PC-9 (cell line): ENCODE measurements at regions of chr16 and their contacts with region 1.

Region 1: GRCh38 chr16:48478396-48478795 is 93.2 kb upstream of the SIAH1 start:
- DNase-seq: no peak
- H3K4me3 ChIP-seq: no peak overlapping the region
- H3K27ac ChIP-seq: no peak overlapping the region
- H3K4me1 ChIP-seq: no peaks in the 10 kb centered on the region
- H3K27me3 ChIP-seq: no peaks in the 10 kb centered on the region
- CTCF ChIP-seq: no peak

Region 2: GRCh38 chr16:48252013-48252412 is 226.4 kb before region 1 on chr16:
- CTCF ChIA-PET with region 1: no interaction called
- POLR2A ChIA-PET with region 1: interaction called, 14 read pairs
- intact Hi-C with region 1: no loop called
- DNase-seq: no peak
- H3K4me3 ChIP-seq: no peak overlapping the region
- H3K27ac ChIP-seq: no peak overlapping the region
- H3K4me1 ChIP-seq: peaks cover 4% of the 10 kb centered on the region; the same call in 1 of the 2 replicates
- H3K27me3 ChIP-seq: no peaks in the 10 kb centered on the region
- CTCF ChIP-seq: no peak

Region 3: GRCh38 chr16:48426244-48427141 is 51.9 kb before region 1 on chr16:
- CTCF ChIA-PET with region 1: no interaction called
- POLR2A ChIA-PET with region 1: no interaction called
- intact Hi-C with region 1: no loop called
- DNase-seq: no peak
- H3K4me3 ChIP-seq: no peak overlapping the region
- H3K27ac ChIP-seq: no peak overlapping the region
- H3K4me1 ChIP-seq: no peaks in the 10 kb centered on the region
- H3K27me3 ChIP-seq: no peaks in the 10 kb centered on the region
- CTCF ChIP-seq: no peak

Region 4: DNA sequence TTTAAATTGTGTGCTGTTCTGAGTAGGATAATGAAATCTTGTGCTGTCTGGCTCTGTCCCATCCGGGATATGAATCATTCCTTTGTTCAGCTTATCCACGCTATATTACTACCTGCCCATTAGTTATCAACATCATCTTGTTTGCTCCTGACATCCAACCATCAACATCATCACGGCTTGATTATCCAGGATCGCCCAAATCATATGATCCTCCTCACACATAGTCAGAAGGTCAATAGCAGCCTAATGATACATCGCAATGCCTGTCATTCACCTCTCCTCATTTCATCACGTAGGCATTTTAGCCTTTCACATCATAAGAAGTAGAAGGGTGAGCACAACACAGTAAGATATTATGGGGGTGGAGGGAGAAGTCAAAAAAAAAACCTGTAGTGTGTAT is 16.2 kb before region 1 on chr16:
- CTCF ChIA-PET with region 1: interaction called, 15 read pairs
- POLR2A ChIA-PET with region 1: no interaction called
- intact Hi-C with region 1: no loop called
- DNase-seq: peak; percentile 10 to 84
- H3K4me3 ChIP-seq: no peak overlapping the region
- H3K27ac ChIP-seq: peak overlapping the region; percentile 58
- H3K4me1 ChIP-seq: peaks cover 20% of the 10 kb centered on the region
- H3K27me3 ChIP-seq: no peaks in the 10 kb centered on the region
- CTCF ChIP-seq: no peak

Region 5: DNA sequence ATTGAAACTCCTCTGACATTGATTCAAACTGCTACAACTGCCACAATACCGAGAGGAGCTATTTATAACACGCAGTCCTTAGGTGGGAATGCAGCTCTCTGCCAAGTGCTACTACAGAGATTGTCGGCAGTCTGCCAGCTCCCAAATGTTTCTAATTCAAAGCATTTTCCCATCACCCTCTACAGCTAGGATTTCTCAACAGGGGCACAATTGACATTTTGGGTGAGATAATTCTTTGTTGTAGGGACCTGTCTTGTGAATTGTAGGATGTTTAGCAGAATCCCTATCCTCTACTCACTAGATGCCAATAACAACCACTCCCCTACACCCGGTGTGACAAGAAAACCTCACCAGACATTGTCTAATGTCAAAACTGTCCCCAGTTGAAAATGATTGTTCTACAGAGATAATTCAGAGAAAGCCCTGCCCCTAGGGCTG is 139.3 kb after region 1 on chr16:
- CTCF ChIA-PET with region 1: interaction called, 19 read pairs
- POLR2A ChIA-PET with region 1: no interaction called
- intact Hi-C with region 1: no loop called
- DNase-seq: no peak
- H3K4me3 ChIP-seq: no peak overlapping the region
- H3K27ac ChIP-seq: no peak overlapping the region
- H3K4me1 ChIP-seq: 0 out of 2 replicates have a peak, but pooled peaks cover 10% of the 10 kb centered on the region
- H3K27me3 ChIP-seq: no peaks in the 10 kb centered on the region
- CTCF ChIP-seq: no peak